ENCODE measurements at regions of chr19 and their contacts with region 1.

Region 1: DNA sequence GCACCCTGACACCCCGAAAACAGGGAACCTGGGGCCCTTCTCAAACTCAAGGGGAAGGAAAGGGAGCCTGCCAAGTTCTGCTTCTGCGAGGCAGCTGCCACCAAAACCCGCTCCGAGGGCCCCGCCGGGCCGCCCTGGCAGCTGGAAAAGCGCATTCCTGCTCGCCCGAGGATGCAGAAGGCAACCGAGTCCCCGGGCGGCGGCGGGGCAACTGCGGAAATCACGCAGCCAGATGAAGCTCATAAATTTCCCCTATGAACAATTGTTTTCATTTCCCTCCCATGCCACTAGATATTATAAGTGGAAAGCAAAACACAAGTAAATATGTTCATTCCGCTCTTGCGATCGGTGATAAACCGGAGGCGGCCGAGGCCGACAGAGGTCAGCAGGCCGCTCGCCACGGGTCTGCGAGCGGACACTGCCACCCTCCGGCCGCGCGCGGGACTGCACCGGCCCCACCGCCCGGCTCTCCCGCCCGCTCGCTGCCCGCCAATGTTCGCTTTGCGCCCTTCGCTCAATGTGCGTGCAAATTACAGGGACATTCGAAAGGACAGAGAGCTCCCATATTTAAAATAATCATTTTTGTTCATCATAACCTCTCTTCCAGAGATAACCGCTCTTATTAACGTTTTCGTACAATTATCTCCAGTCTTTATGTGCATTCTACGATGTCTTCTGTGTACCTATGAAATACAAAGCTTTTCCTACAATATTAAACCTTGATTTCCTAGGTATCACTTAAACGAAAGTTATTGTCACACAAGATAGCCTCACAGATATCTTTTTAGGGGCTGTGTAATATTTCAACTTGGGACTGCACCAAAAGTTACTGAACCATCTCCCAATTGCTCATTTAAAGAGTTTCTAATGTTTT is 120.8 kb upstream of the ZNF507 start:
- DNase-seq: no peak
- H3K4me3 ChIP-seq: peak overlapping the region in 2 of 4 donors; percentile 2 to 46
- H3K27ac ChIP-seq: no peak overlapping the region
- H3K4me1 ChIP-seq: peaks cover 0 to 10% (median 0%) of the 10 kb centered on the region in 3 donors
- H3K27me3 ChIP-seq: peaks cover 0 to 54% (median 2%) of the 10 kb centered on the region in 4 donors
- CTCF ChIP-seq: peak; percentile 84 to 99 (median 96)
- POLR2A ChIP-seq: no peak

Region 2: GRCh38 chr19:30682999-30683536 is 1541.5 kb before region 1 on chr19:
- intact Hi-C with region 1: loop called (anchors 10 kb)
- DNase-seq: no peak
- H3K4me3 ChIP-seq: no peak overlapping the region
- H3K27ac ChIP-seq: no peak overlapping the region
- H3K4me1 ChIP-seq: peaks cover 0 to 30% (median 13%) of the 10 kb centered on the region in 3 donors
- H3K27me3 ChIP-seq: peaks cover 0 to 31% (median 0%) of the 10 kb centered on the region in 4 donors
- CTCF ChIP-seq: peak; percentile 67 to 87 (median 82)
- POLR2A ChIP-seq: no peak

Region 3: GRCh38 chr19:32091241-32091640 is 133.4 kb before region 1 on chr19:
- intact Hi-C with region 1: no loop called
- DNase-seq: no peak
- H3K4me3 ChIP-seq: no peak overlapping the region
- H3K27ac ChIP-seq: no peak overlapping the region
- H3K4me1 ChIP-seq: no peaks in the 10 kb centered on the region
- H3K27me3 ChIP-seq: no peaks in the 10 kb centered on the region
- CTCF ChIP-seq: no peak
- POLR2A ChIP-seq: no peak

Measured in esophagus squamous epithelium (tissue), 5 donors.